A673 (cell line): ENCODE measurements at regions of chr7 and their contacts with region 1.

Region 1: GRCh38 chr7:115851291-115851690 is 179.3 kb downstream of the TFEC start:
- DNase-seq: peak; percentile 78
- H3K4me3 ChIP-seq: no peak overlapping the region
- H3K27ac ChIP-seq: no peak overlapping the region
- H3K4me1 ChIP-seq: no peaks in the 10 kb centered on the region
- H3K27me3 ChIP-seq: peaks cover 7% of the 10 kb centered on the region
- CTCF ChIP-seq: peak; percentile 67

Region 2: DNA sequence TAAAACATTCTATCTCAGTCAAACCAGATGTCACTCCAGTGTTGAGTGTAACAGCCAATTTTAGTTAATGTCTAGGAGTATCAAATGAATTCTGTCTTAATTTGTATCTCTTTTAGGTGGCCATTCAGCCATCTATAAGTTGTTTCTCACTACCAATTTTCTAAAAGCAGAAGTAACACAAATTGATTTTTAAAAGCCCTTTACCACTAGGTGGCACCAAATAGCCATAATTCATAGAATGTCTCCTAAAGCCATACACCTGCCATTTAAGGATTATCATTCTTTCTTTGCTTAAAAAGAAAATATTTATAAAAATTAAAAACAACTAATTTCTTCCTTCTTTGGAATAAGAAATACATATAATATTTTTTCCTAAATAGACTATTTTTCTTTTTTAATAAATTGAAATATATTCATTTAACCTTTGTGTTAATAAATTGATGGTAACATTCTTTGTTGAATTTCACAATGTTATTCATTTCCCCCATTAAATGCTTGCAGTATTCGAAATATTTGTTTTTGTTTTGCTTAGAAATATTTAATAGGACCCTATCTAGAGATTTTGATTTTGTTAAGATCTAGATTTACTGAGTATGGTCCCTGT is 1824.7 kb before region 1 on chr7:
- CTCF ChIA-PET with region 1: no interaction called
- POLR2A ChIA-PET with region 1: no interaction called
- intact Hi-C with region 1: loop called (anchors 2 kb)
- DNase-seq: peak; percentile 76
- H3K4me3 ChIP-seq: no peak overlapping the region
- H3K27ac ChIP-seq: no peak overlapping the region
- H3K4me1 ChIP-seq: no peaks in the 10 kb centered on the region
- H3K27me3 ChIP-seq: peaks cover 42% of the 10 kb centered on the region
- CTCF ChIP-seq: peak; percentile 71

Region 3: DNA sequence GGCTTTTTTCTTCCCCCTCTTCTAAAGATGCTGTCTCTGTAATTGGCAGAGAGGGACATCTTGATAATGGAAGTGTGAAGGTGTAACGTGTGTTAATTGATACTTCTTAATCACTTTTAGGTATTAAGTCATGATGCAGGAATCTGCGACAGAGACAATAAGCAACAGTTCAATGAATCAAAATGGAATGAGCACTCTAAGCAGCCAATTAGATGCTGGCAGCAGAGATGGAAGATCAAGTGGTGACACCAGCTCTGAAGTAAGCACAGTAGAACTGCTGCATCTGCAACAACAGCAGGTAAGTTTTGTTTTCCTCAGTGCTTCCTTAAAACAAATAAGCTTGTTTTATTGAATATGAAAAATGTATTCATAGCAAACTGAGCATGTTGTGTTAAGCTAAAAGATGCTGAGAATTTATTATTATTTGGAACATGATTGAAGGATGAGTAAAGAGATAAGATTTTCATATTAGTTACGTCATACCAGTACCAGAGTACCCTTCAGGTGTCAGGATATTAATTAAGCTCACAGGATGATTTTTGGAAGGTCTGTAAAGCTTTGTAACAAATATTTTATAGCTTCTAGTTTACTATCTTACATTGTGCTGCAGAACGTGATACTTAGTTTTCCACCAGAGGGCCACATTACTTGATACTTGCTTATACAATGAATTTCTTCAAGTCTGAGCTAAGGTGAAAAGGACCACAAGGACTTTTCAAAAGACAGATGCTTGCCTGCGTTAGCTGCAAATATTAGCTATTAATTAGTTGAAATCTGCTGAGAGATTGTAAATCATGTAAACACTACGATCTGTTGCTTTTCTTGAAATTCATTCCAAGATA is 1424.7 kb before region 1 on chr7:
- CTCF ChIA-PET with region 1: no interaction called
- POLR2A ChIA-PET with region 1: no interaction called
- intact Hi-C with region 1: loop called (anchors 10 kb)
- DNase-seq: peak; percentile 19
- H3K4me3 ChIP-seq: no peak overlapping the region
- H3K27ac ChIP-seq: no peak overlapping the region
- H3K4me1 ChIP-seq: no peaks in the 10 kb centered on the region
- H3K27me3 ChIP-seq: peaks cover 31% of the 10 kb centered on the region
- CTCF ChIP-seq: peak; percentile 43

Region 4: DNA sequence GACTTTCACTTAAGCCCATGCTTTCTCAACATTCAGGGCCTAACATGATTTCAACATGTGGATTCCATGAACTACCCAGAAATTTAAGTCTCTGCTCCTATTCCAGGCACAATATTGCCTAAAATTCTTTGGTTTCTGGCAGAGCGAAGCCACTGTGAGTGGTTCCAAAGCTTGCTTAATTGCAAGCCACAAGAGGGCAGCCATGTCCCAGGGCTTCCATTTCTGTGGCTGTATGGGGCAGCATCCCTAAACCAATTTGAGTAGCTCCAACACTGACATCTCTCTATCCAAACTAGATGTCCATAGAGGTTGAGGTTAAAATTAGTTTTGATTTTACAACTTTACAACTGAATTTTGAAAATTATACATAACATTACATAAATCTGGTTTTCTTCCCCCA is 985.7 kb before region 1 on chr7:
- CTCF ChIA-PET with region 1: interaction called, 4 read pairs
- POLR2A ChIA-PET with region 1: no interaction called
- intact Hi-C with region 1: loop called (anchors 10 kb)
- DNase-seq: peak; percentile 71
- H3K4me3 ChIP-seq: no peak overlapping the region
- H3K27ac ChIP-seq: no peak overlapping the region
- H3K4me1 ChIP-seq: no peaks in the 10 kb centered on the region
- H3K27me3 ChIP-seq: no peaks in the 10 kb centered on the region
- CTCF ChIP-seq: peak; percentile 73

Region 5: GRCh38 chr7:115356139-115356746 is 495.0 kb before region 1 on chr7:
- CTCF ChIA-PET with region 1: no interaction called
- POLR2A ChIA-PET with region 1: no interaction called
- intact Hi-C with region 1: loop called (anchors 5 kb)
- DNase-seq: peak; percentile 54
- H3K4me3 ChIP-seq: no peak overlapping the region
- H3K27ac ChIP-seq: no peak overlapping the region
- H3K4me1 ChIP-seq: no peaks in the 10 kb centered on the region
- H3K27me3 ChIP-seq: no peaks in the 10 kb centered on the region
- CTCF ChIP-seq: peak; percentile 64

Region 6: DNA sequence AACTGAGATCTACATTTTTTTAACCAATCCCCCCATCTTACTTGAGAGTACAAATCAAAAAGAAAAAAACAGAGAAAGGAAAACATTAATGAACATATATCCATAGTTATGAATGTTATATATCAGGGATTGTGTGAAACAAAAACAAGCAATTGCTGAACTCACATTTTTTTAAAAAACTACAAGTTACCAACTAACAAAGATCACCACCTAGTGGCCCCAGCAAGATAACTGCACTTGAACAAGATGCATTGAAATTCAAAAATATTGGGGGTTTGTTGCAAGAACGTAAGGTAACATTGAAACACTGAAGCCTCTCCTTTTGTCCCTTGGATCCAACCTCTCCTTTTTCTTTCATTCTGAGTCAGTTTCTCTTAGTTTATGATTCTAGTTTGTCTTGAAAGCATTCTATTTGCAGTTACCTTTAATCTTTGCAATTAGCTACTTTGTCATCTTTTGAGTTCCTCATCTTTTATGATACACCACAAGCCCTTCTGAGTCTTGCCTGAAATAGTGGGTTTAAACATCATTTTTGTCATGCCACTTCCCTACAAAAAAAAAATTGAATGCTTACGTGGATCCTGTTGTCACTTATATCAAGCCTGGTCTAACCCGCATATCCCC is 271.8 kb after region 1 on chr7:
- CTCF ChIA-PET with region 1: no interaction called
- POLR2A ChIA-PET with region 1: no interaction called
- intact Hi-C with region 1: loop called (anchors 5 kb)
- DNase-seq: peak; percentile 63
- H3K4me3 ChIP-seq: no peak overlapping the region
- H3K27ac ChIP-seq: no peak overlapping the region
- H3K4me1 ChIP-seq: no peaks in the 10 kb centered on the region
- H3K27me3 ChIP-seq: no peaks in the 10 kb centered on the region
- CTCF ChIP-seq: peak; percentile 85